Cardiac septum (tissue), 1 donor: ENCODE measurements at regions of chr2 and their contacts with region 1.

Region 1: DNA sequence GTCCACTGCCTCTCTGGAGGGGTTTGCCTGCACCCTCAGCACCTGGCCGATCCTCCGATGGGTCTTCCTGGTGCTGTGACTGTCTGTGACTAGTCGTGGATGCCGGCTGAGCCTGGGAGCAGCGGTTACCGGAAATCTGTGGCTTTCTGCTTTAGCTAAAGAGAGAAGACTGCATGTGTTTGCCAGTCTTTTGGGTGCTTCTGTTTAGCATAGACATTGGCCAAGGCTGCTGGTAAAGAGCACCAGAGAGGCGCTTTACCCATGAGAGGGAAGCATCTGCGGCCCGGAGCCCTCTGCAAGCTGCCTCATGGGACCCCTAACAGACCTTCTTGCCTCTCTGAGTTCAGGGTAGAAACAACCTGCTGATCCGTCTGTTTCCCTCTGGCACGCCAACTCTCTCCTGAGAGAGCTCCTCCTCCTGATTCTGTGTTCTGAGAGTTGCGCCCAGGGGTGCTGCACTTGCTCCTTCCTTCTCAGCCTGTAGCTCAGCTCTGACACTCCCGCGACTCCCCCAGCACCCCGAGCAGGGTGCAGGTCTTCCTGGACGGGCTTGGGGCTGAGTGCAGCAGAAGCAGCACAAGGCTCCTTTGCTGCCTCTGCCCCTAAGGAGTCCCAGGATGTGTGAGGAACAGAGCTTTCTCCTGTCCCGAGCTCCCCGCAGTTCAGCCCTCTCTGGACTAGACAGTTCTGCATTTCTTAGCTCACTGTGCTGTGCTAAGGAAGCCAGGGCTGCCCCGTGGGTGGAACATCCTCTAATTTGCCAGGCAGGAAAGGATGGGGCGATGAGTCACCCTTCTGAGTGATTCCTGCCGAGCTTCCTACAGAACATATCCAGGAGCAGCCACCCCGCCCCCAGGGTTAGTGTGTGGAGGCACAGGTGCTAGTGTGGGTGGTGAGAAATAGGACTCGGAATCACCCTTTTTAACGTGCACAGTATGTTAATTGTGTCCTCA is 203.2 kb downstream of the SH3RF3 start:
- DNase-seq: peak; percentile 86

Region 2: GRCh38 chr2:109213646-109214417 is 118.3 kb before region 1 on chr2:
- intact Hi-C with region 1: no loop called
- DNase-seq: peak; percentile 85

Region 3: GRCh38 chr2:109317471-109318095 is 14.6 kb before region 1 on chr2:
- intact Hi-C with region 1: no loop called
- DNase-seq: no peak

Region 4: DNA sequence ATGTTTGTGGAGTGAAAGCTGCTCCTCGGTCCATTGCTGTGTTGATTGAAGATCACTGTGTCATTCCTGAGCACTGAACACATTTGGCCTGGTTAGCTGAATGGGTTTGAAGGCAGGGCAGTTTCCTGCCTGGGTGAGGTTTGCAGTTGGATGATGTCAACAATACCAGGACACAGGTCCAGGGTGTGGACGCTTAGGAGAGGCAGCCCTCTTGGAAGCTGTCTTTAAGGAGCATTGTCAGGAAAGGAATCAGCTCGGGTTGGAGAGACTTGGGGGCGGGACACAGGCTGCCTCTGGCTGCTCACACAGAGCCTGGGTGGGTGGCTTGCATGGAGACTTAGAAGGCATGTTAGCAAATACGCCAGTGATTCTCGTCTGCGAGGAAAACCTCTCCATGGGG is 43.9 kb after region 1 on chr2:
- intact Hi-C with region 1: loop called (anchors 5 kb)
- DNase-seq: peak; percentile 74